ENCODE measurements at regions of chr1 and their contacts with region 1.

Region 1: DNA sequence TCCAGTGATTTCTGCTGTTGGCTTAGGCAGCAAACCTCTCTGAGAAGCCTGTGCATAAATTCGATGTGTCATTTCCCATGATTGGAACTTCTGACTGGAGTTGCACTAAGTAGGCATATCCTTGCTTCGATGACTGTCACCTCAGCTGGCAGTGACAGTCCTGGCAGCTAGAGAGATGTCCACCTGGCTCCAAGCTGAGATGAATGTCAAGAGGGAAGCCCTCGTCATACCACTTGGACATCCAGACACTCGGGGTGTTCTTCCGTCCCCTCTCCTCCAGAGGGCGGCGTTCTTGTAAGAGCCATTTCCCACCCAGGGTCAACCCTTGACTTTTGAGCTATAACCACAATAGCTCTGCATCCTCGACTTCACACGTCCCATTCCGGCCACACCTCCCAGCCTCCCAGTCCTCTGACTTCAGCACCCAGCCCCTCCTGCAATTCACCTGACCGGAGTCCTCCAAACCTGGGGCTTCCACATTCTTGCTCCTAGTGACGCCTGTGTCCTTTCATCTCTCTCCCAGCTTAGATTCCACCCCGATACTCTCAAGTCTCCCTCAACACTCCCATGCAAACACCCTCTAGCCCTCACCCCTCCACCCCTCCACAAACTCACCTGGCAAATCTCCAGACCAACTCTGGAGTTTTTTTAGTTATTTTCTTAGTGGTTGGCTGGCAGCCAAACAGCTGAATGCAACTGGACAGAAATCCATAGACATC is 17.3 kb downstream of the CA6 start:
- DNase-seq: peak; percentile 66
- H3K4me3 Mint-ChIP-seq: peak overlapping the region; percentile 62
- H3K27ac Mint-ChIP-seq: peak overlapping the region; percentile 84
- H3K4me1 Mint-ChIP-seq: peaks cover 94% of the 10 kb centered on the region
- H3K27me3 Mint-ChIP-seq: no peaks in the 10 kb centered on the region

Region 2: DNA sequence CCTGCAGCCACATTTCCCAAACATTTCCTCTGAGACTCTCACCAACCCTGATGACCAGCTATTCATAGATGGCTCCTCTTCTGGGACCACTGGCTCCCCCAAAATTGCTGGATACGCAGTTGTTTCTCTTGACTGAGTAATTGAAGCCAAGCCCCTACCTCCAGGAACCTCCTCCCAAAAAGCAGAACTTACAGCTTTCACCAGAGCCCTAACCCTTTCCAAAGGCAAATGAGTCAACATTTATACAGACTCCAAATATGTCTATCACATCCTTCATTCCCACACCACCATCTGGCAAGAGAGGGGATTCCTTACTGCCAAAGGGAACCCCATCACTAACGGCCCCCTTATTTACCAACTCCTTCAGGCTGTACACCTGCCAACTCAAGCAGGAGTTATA is 37.6 kb before region 1 on chr1:
- CTCF ChIA-PET with region 1: interaction called, 16 read pairs
- DNase-seq: no peak
- H3K4me3 Mint-ChIP-seq: no peak overlapping the region
- H3K27ac Mint-ChIP-seq: no peak overlapping the region
- H3K4me1 Mint-ChIP-seq: peaks cover 43% of the 10 kb centered on the region
- H3K27me3 Mint-ChIP-seq: no peaks in the 10 kb centered on the region

Region 3: GRCh38 chr1:8941906-8942305 is 21.1 kb before region 1 on chr1:
- CTCF ChIA-PET with region 1: interaction called, 26 read pairs
- DNase-seq: no peak
- H3K4me3 Mint-ChIP-seq: no peak overlapping the region
- H3K27ac Mint-ChIP-seq: peak overlapping the region; percentile 88
- H3K4me1 Mint-ChIP-seq: peaks cover 93% of the 10 kb centered on the region
- H3K27me3 Mint-ChIP-seq: no peaks in the 10 kb centered on the region

Region 4: GRCh38 chr1:8976896-8977450 is 14.0 kb after region 1 on chr1:
- CTCF ChIA-PET with region 1: no interaction called
- DNase-seq: no peak
- H3K4me3 Mint-ChIP-seq: no peak overlapping the region
- H3K27ac Mint-ChIP-seq: no peak overlapping the region
- H3K4me1 Mint-ChIP-seq: peaks cover 26% of the 10 kb centered on the region
- H3K27me3 Mint-ChIP-seq: peaks cover 17% of the 10 kb centered on the region

Region 5: GRCh38 chr1:9078015-9078750 is 115.2 kb after region 1 on chr1:
- CTCF ChIA-PET with region 1: no interaction called
- DNase-seq: peak; percentile 52
- H3K4me3 Mint-ChIP-seq: peak overlapping the region; percentile 5
- H3K27ac Mint-ChIP-seq: no peak overlapping the region
- H3K4me1 Mint-ChIP-seq: peaks cover 71% of the 10 kb centered on the region
- H3K27me3 Mint-ChIP-seq: peaks cover 33% of the 10 kb centered on the region